ENCODE measurements at regions of chr3 and their contacts with region 1.

Region 1: DNA sequence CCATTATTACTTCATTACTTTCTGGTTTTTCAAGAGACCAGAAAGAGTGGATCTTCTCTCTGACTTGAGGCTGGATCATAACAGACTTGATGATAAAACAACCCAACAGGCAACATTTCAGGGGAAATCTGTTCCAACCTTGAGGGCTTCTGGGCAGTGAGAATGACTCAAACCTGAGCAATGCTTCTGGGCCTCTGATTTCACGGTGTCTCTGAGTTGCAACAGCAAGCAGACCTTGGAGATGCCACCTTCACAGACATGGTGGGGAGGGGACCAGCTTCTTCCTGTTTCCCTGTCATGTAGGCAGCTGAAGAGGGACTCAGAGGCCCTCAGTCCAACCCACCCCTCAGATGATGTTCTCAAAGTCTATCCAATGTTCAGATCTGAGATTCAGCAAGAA is 104.0 kb downstream of the ABHD5 start:
- DNase-seq: no peak
- ATAC-seq: no peak

Region 2: DNA sequence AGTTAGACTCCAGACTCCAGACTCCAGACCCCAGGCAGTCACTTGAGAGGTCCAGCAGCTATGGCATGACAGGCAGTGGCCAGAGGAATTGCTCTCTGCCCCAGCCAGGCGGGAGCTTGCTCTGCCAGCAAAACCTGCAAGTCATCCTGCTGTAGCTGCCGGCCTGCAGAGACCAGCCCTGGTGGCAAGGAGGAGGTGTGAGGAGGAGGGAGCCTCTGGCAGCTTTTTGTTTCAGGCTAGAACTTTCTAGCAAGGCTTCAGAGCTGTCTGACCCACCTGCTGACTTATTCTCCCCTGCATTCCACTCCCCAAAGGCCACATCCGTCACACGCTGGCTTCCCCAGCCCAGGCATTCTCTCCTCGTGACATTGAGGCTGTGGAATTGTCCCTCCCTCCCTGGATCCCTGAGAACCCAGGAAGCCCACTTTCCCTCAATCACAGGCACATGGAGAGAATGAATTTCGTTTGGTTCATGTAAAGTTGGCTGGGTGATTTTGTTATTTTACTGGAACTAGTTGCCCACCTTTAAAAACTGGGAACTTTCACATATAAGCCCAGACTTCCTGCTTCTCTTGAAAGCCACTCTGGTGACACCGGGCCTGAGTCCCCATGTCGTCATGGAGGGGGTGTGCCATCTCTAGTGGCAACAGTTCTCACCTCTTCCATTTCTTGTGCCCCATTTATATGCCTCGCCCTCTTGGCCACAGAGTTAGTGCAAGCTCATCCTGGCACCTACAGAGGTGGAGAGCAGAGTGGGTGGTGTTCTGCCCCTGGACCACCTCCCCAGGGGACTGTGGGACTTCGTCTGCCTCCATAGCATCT is 21.3 kb before region 1 on chr3:
- intact Hi-C with region 1: no loop called
- DNase-seq: no peak
- ATAC-seq: no peak

Region 3: DNA sequence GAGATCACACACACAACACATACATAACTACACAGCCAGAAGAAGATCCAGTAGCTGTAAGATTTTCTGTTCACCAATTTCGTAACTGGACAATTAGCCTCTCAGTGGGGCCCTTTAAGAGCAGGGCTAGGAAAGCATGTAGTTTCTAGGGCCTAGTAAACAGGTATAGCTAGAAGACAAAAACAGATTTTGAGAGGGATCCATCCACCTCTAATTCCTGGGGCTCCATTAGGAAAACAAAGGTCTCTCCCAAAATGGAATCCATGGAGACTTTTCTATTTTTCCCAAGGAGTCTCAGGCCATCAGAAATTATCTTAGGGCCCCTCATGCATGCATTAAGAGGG is 977.3 kb after region 1 on chr3:
- intact Hi-C with region 1: loop called (anchors 5 kb)
- DNase-seq: no peak
- ATAC-seq: no peak